Naive thymus-derived CD4-positive, alpha-beta T cell (primary cell): ENCODE measurements at regions of chr21 and their contacts with region 1.

Region 1: DNA sequence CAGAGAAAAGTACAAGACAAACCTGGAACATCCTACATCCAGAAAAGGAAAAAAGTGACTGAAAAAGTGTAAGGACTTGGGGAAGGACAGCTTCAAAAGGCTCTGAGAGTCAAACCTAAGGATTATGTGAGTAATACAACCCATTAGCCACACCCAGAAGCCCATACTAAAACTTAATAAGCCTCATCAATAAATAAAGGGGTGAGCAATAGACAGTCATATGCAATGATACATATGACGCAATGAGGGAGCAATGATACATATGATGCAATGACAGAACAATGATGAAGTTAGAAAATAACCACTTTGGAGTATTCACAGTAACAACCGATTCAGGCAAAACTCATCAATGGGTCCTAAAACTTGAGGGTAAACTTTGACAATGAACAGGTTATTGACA is 50.1 kb downstream of the BRWD1 start:
- DNase-seq: no peak
- ATAC-seq: no peak
- H3K4me3 ChIP-seq: no peak overlapping the region
- H3K4me3 Mint-ChIP-seq: no peak overlapping the region
- H3K27ac ChIP-seq: no peak overlapping the region
- H3K27ac Mint-ChIP-seq: no peak overlapping the region
- H3K4me1 ChIP-seq: no peaks in the 10 kb centered on the region
- H3K4me1 Mint-ChIP-seq: peaks cover 0 to 19% (median 8%) of the 10 kb centered on the region in 7 donors
- H3K27me3 ChIP-seq: no peaks in the 10 kb centered on the region
- H3K27me3 Mint-ChIP-seq: no peaks in the 10 kb centered on the region

Region 2: GRCh38 chr21:39296891-39297290 is 33.5 kb after region 1 on chr21:
- CTCF ChIA-PET with region 1: no interaction called
- POLR2A ChIA-PET with region 1: no interaction called
- intact Hi-C with region 1: loop called in 1 of 2 experiments (anchors 5 kb)
- DNase-seq: no peak
- ATAC-seq: no peak
- H3K4me3 ChIP-seq: no peak overlapping the region
- H3K4me3 Mint-ChIP-seq: peak overlapping the region in 2 of 10 donors; percentile 36 to 54
- H3K27ac ChIP-seq: no peak overlapping the region
- H3K27ac Mint-ChIP-seq: peak overlapping the region in 2 of 9 donors; percentile 37 to 62
- H3K4me1 ChIP-seq: peaks cover 9 to 12% of the 10 kb centered on the region in 2 donors
- H3K4me1 Mint-ChIP-seq: peaks cover 19 to 51% (median 39%) of the 10 kb centered on the region in 7 donors
- H3K27me3 ChIP-seq: no peaks in the 10 kb centered on the region
- H3K27me3 Mint-ChIP-seq: no peaks in the 10 kb centered on the region